ENCODE measurements at regions of chr6 and their contacts with region 1.

Region 1: GRCh38 chr6:30781743-30782424 is 37.5 kb upstream of the IER3 start:
- DNase-seq: peak; percentile 98
- H3K4me3 ChIP-seq: no peak overlapping the region; the same call in 1 of the 2 replicates
- H3K27ac ChIP-seq: peak overlapping the region; percentile 100
- H3K27me3 ChIP-seq: no peaks in the 10 kb centered on the region
- CTCF ChIP-seq: no peak

Region 2: GRCh38 chr6:30742316-30743098 is 39.4 kb before region 1 on chr6 and contains the start of gene FLOT1:
- CTCF ChIA-PET with region 1: interaction called, 3 read pairs
- POLR2A ChIA-PET with region 1: interaction called, 47 read pairs
- DNase-seq: peak; percentile 84
- H3K4me3 ChIP-seq: peak within 1 kb of the TSS; percentile 94
- H3K27ac ChIP-seq: peak within 1 kb of the TSS; percentile 93
- H3K27me3 ChIP-seq: no peaks in the 10 kb centered on the region
- CTCF ChIP-seq: no peak
- polyA plus RNA-seq, gene FLOT1: 155 and 156 TPM in 2 replicates

Region 3: GRCh38 chr6:30752157-30752927 is 29.5 kb before region 1 on chr6:
- CTCF ChIA-PET with region 1: interaction called, 6 read pairs
- POLR2A ChIA-PET with region 1: interaction called, 49 read pairs
- DNase-seq: peak; percentile 99
- H3K4me3 ChIP-seq: no peak overlapping the region
- H3K27ac ChIP-seq: peak overlapping the region; percentile 99
- H3K27me3 ChIP-seq: no peaks in the 10 kb centered on the region
- CTCF ChIP-seq: 0 out of 2 replicates have a peak, but pooled peaks have one; percentile 13

Region 4: GRCh38 chr6:30759575-30760239 is 22.2 kb before region 1 on chr6:
- CTCF ChIA-PET with region 1: interaction called, 3 read pairs
- POLR2A ChIA-PET with region 1: interaction called, 18 read pairs
- DNase-seq: peak; percentile 93
- H3K4me3 ChIP-seq: no peak overlapping the region
- H3K27ac ChIP-seq: peak overlapping the region; percentile 94
- H3K27me3 ChIP-seq: no peaks in the 10 kb centered on the region
- CTCF ChIP-seq: no peak

Region 5: GRCh38 chr6:30769088-30769852 is 12.6 kb before region 1 on chr6:
- CTCF ChIA-PET with region 1: interaction called, 5 read pairs
- POLR2A ChIA-PET with region 1: interaction called, 22 read pairs
- DNase-seq: peak; percentile 86
- H3K4me3 ChIP-seq: peak overlapping the region; percentile 49
- H3K27ac ChIP-seq: peak overlapping the region; percentile 100
- H3K27me3 ChIP-seq: no peaks in the 10 kb centered on the region
- CTCF ChIP-seq: no peak

Region 6: GRCh38 chr6:30793521-30794194 is 11.8 kb after region 1 on chr6:
- CTCF ChIA-PET with region 1: no interaction called
- POLR2A ChIA-PET with region 1: interaction called, 10 read pairs
- DNase-seq: peak; percentile 59
- H3K4me3 ChIP-seq: no peak overlapping the region
- H3K27ac ChIP-seq: peak overlapping the region; percentile 84
- H3K27me3 ChIP-seq: no peaks in the 10 kb centered on the region
- CTCF ChIP-seq: no peak